SK-N-SH (cell line): ENCODE measurements at regions of chr1 and their contacts with region 1.

Region 1: GRCh38 chr1:62841587-62842169 is 57.7 kb downstream of the ATG4C start:
- DNase-seq: peak; percentile 52
- H3K4me3 ChIP-seq: no peak overlapping the region; a peak in 1 of 4 replicates
- H3K27ac ChIP-seq: no peak overlapping the region
- H3K4me1 ChIP-seq: no peaks in the 10 kb centered on the region; a peak in 1 of 4 replicates
- H3K27me3 ChIP-seq: no peaks in the 10 kb centered on the region
- CTCF ChIP-seq: peak; percentile 80
- EP300 ChIP-seq: no peak
- RAD21 ChIP-seq: peak; percentile 89

Region 2: DNA sequence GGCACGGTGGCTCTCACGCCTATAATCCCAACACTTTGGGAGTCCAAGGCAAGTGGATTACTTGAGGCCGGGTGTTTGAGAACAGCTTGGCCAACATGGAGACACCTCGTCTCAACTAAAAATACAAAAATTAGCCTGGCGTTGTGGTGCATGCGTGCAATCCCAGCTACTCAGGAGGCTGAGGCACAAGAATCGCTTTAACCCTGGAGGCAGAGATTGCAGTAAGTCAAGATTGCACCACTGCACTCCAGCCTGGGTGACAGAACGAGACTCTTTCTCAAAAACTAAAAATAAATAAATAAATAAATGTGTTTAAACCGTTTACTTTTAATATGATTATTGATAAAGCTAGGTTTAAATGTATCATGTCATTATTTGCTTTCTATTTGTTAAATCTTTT is 26.9 kb before region 1 on chr1:
- CTCF ChIA-PET with region 1: interaction called, 11 read pairs
- POLR2A ChIA-PET with region 1: no interaction called
- DNase-seq: no peak
- H3K4me3 ChIP-seq: no peak overlapping the region
- H3K27ac ChIP-seq: no peak overlapping the region
- H3K4me1 ChIP-seq: no peaks in the 10 kb centered on the region
- H3K27me3 ChIP-seq: no peaks in the 10 kb centered on the region
- CTCF ChIP-seq: no peak
- EP300 ChIP-seq: no peak
- RAD21 ChIP-seq: no peak

Region 3: GRCh38 chr1:62882201-62883104 is 40.8 kb after region 1 on chr1:
- CTCF ChIA-PET with region 1: interaction called, 13 read pairs
- POLR2A ChIA-PET with region 1: no interaction called
- DNase-seq: peak; percentile 47
- H3K4me3 ChIP-seq: no peak overlapping the region
- H3K27ac ChIP-seq: no peak overlapping the region
- H3K4me1 ChIP-seq: peaks cover 0 to 6% of the 10 kb centered on the region in 2 experiments; a peak in 2 of 4 replicates
- H3K27me3 ChIP-seq: no peaks in the 10 kb centered on the region
- CTCF ChIP-seq: no peak
- EP300 ChIP-seq: peak in 1 of 2 experiments; percentile 47; a peak in 2 of 4 replicates
- RAD21 ChIP-seq: no peak

Region 4: DNA sequence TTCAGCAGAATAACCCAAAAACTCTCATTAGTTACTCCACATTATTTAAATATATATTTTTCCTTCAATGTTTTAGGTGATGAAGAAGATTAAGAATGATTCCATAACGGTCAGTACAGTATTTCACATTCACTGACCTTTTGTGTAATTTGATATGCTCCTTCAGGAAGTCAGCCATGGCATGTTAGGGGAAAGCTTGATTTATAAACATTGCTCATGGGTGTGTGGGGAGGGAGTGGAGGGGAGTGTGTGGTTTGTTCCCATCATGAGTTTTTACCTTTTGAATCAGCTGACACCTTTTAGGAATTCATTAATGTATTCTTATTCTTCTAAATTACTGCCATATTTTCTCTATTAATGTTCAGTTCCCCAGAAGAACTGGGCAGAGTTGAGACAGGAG is 182.5 kb after region 1 on chr1:
- CTCF ChIA-PET with region 1: no interaction called
- POLR2A ChIA-PET with region 1: no interaction called
- DNase-seq: no peak
- H3K4me3 ChIP-seq: no peak overlapping the region
- H3K27ac ChIP-seq: no peak overlapping the region
- H3K4me1 ChIP-seq: no peaks in the 10 kb centered on the region
- H3K27me3 ChIP-seq: no peaks in the 10 kb centered on the region
- CTCF ChIP-seq: no peak
- EP300 ChIP-seq: no peak
- RAD21 ChIP-seq: no peak

Region 5: DNA sequence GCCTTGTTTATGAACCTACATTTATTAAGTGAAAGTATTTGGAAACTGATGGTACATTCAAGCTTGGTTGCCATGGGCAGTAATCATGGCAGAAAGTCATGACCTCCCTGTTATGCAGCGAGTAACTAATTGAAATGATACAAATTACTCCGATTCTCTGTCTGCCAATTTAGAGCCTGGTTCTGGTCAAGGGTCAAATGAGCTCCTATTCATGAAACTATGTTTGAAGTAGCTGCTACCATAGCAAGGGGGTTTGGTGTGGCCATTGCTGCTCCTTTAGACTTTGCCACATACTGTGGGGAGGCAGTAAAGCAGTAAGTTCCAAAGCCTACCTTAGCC is 293.5 kb after region 1 on chr1:
- CTCF ChIA-PET with region 1: interaction called, 18 read pairs
- POLR2A ChIA-PET with region 1: no interaction called
- DNase-seq: no peak
- H3K4me3 ChIP-seq: no peak overlapping the region
- H3K27ac ChIP-seq: no peak overlapping the region
- H3K4me1 ChIP-seq: no peaks in the 10 kb centered on the region
- H3K27me3 ChIP-seq: 0 out of 2 replicates have a peak, but pooled peaks cover 5% of the 10 kb centered on the region
- CTCF ChIP-seq: no peak
- EP300 ChIP-seq: no peak
- RAD21 ChIP-seq: no peak

Region 6: DNA sequence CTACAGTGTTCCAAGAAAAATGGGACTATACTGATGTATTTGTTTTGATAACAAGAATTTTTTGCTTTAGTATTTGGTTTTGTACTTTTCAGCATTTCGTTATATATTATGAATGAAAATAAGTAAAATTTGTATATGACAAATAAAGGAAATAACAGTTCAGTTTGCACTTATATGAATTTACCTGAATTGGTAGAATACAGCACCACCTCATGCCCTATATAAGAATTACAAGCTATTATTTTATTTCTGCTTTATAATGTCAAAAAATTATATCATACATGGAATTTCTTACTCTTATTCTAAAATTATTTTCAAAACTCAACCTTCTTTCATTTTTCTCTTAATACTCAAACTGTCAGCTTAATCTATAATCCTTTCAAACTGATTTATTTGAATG is 696.3 kb after region 1 on chr1:
- CTCF ChIA-PET with region 1: interaction called, 21 read pairs
- POLR2A ChIA-PET with region 1: no interaction called
- DNase-seq: peak; percentile 7
- H3K4me3 ChIP-seq: no peak overlapping the region
- H3K27ac ChIP-seq: no peak overlapping the region
- H3K4me1 ChIP-seq: no peaks in the 10 kb centered on the region
- H3K27me3 ChIP-seq: no peaks in the 10 kb centered on the region
- CTCF ChIP-seq: peak; percentile 70
- EP300 ChIP-seq: no peak
- RAD21 ChIP-seq: peak; percentile 59